B cell (primary cell): ENCODE measurements at regions of chr2 and their contacts with region 1.

Region 1: GRCh38 chr2:124664363-124664762 is 639.3 kb downstream of the CNTNAP5 start:
- DNase-seq: no peak
- ATAC-seq: no peak
- H3K4me3 ChIP-seq: no peak overlapping the region
- H3K4me3 Mint-ChIP-seq: no peak overlapping the region
- H3K27ac ChIP-seq: no peak overlapping the region
- H3K27ac Mint-ChIP-seq: no peak overlapping the region
- H3K4me1 ChIP-seq: no peaks in the 10 kb centered on the region
- H3K4me1 Mint-ChIP-seq: no peaks in the 10 kb centered on the region
- H3K27me3 ChIP-seq: no peaks in the 10 kb centered on the region
- H3K27me3 Mint-ChIP-seq: no peaks in the 10 kb centered on the region
- CTCF ChIP-seq: no peak

Region 2: DNA sequence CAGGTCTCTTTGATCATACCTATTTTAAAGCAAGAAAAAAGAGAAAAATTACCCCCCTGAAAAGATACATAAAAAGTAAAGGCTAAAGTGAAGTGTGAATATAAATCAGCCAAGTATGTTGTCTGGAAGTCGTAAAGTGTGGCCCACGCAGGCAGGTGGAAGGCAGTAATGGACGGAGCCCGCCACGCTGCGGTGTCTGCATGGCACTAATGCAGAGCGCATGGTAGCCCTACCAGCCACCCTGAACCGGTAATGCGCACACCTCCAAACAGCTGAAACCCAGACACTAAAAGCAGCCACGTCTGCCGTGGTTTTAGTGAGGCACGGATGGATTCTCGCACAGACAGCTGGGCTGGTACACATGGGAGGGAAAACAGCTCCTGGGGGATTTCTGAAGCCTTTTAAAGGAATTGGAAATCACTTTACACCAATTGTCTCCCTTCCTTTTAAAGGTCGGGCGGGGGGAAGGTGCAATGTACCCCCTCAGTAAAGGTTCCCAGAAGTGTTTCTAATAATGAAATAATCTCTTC is 24.1 kb before region 1 on chr2:
- CTCF ChIA-PET with region 1: no interaction called
- POLR2A ChIA-PET with region 1: interaction called, 12 read pairs
- intact Hi-C with region 1: no loop called
- DNase-seq: no peak
- ATAC-seq: no peak
- H3K4me3 ChIP-seq: no peak overlapping the region
- H3K4me3 Mint-ChIP-seq: no peak overlapping the region
- H3K27ac ChIP-seq: no peak overlapping the region
- H3K27ac Mint-ChIP-seq: no peak overlapping the region
- H3K4me1 ChIP-seq: no peaks in the 10 kb centered on the region
- H3K4me1 Mint-ChIP-seq: no peaks in the 10 kb centered on the region
- H3K27me3 ChIP-seq: no peaks in the 10 kb centered on the region
- H3K27me3 Mint-ChIP-seq: no peaks in the 10 kb centered on the region
- CTCF ChIP-seq: no peak